PC-3 (cell line): ENCODE measurements at regions of chr1 and their contacts with region 1.

Region 1: DNA sequence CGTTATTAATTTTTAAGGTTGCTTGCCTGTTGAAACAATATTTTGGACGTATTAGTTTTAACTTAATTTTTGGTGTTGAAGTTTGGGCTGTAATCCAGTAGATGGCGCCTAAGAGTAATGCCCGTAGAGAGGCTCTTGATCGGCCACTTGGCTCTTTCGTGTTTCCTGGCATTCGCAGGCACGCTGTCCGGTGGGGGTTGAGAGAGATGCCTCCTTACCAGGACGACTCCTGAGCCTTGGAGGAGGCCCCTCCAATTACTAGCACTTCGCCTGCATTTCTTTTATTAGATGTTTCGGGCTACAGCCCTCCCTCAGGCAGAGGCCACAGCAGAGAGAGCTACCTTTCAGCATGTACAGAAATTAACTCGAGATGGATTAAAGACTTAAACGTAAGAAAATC is 12.0 kb downstream of the OR2M4 start:
- DNase-seq: peak; percentile 86
- ATAC-seq: peak; percentile 85
- H3K4me3 ChIP-seq: peak overlapping the region; percentile 37; the same call in 1 of the 2 replicates
- H3K27ac ChIP-seq: no peak overlapping the region
- H3K4me1 ChIP-seq: no peaks in the 10 kb centered on the region
- H3K27me3 ChIP-seq: peaks cover 5% of the 10 kb centered on the region; the same call in 1 of the 2 replicates
- CTCF ChIP-seq: peak; percentile 94

Region 2: DNA sequence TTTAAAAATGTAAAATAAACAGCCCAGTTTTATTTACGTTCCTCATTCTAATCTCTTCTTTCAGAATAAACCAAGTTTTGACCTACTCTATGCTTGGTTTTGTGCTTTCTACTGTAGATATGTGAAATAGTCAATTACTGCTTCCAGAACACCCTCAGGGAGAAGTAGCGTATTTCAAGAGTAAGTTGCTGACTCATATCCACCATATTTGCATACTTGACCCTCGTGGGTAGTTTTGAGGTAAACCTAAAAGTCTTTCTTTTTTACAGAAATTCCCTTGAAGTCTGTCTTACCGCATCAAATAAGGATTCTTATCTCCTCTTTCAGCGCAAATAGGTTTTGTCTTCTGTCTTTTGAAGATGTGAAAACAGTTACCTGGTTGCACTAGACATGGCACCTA is 198.0 kb before region 1 on chr1:
- CTCF ChIA-PET with region 1: interaction called, 3 read pairs
- POLR2A ChIA-PET with region 1: no interaction called
- intact Hi-C with region 1: loop called (anchors 1 kb)
- DNase-seq: no peak
- ATAC-seq: no peak
- H3K4me3 ChIP-seq: no peak overlapping the region
- H3K27ac ChIP-seq: no peak overlapping the region
- H3K4me1 ChIP-seq: no peaks in the 10 kb centered on the region
- H3K27me3 ChIP-seq: no peaks in the 10 kb centered on the region
- CTCF ChIP-seq: no peak

Region 3: GRCh38 chr1:248102847-248103246 is 140.4 kb before region 1 on chr1:
- CTCF ChIA-PET with region 1: no interaction called
- POLR2A ChIA-PET with region 1: no interaction called
- intact Hi-C with region 1: loop called (anchors 5 kb)
- DNase-seq: no peak
- ATAC-seq: no peak
- H3K4me3 ChIP-seq: no peak overlapping the region
- H3K27ac ChIP-seq: no peak overlapping the region
- H3K4me1 ChIP-seq: peaks cover 11% of the 10 kb centered on the region
- H3K27me3 ChIP-seq: no peaks in the 10 kb centered on the region
- CTCF ChIP-seq: no peak

Region 4: DNA sequence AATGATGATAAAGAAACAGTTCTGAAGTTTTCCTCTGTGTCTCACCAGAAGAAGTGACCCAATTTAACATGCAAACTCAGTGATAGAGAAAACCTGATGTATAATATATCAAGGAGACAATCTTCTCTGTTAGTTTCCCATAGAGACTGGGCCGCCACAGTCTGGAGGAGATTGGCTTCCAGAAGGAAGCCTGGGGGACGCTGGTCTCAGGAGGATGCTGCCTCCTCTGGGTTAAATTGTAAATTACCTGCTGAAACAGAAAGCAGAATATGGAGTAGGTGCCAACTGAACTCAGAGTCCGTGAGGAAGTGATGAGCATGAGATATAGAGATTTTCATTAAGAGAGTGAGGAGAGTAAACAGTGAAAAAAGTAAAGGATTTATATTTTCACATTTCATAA is 443.6 kb after region 1 on chr1:
- CTCF ChIA-PET with region 1: no interaction called
- POLR2A ChIA-PET with region 1: no interaction called
- intact Hi-C with region 1: loop called (anchors 1 kb)
- DNase-seq: peak; percentile 66
- ATAC-seq: peak; percentile 87
- H3K4me3 ChIP-seq: no peak overlapping the region
- H3K27ac ChIP-seq: no peak overlapping the region
- H3K4me1 ChIP-seq: peaks cover 11% of the 10 kb centered on the region
- H3K27me3 ChIP-seq: peaks cover 4% of the 10 kb centered on the region; the same call in 1 of the 2 replicates
- CTCF ChIP-seq: peak; percentile 84